Ascending aorta (tissue), 2 donors: ENCODE measurements at regions of chr10 and their contacts with region 1.

Region 1: DNA sequence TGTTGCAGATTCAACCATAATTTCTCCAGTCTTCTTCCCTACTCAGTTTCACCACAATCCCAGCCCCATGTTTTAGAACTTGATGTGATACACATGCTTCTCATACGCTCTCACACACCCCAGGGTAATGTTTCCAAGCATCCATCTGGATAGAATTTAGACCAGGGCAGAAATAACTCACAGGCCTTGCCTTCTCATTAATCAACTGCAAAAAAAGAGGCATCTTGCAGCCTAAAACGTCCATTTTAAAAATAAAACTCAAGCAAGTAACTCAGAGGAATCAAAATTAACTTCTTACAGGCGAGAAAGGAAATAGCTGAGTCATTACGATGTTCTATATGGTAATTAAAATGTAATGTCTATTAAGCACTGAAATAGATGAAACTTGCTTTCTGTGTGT is 127.2 kb upstream of the RSU1 start:
- DNase-seq: no peak
- H3K4me3 ChIP-seq: peak overlapping the region in 1 of 2 donors; percentile 8
- H3K27ac ChIP-seq: peak overlapping the region; percentile 58 to 76
- H3K4me1 ChIP-seq: peaks cover 2 to 27% of the 10 kb centered on the region in 2 donors
- H3K27me3 ChIP-seq: no peaks in the 10 kb centered on the region
- CTCF ChIP-seq: no peak

Region 2: DNA sequence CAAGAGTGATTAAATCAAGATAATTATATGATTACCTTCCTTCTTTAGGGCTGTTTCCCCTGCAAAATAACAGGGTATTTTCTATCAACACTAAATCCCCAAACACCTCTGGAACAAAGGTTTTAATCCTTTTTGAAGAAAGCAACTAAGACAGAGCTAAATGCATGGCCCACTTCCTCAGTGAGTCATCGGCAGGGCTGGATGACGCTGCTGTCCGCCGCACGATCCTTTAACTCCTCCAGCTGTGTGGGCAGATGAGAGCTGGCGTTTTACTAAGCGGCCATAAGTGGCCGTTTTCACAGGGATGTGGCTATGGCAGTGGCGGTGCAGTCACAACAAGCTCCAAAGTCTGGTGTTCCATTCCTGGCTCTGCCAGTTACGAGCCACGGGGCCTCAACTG is 346.7 kb before region 1 on chr10:
- intact Hi-C with region 1: no loop called
- DNase-seq: no peak
- H3K4me3 ChIP-seq: no peak overlapping the region
- H3K27ac ChIP-seq: no peak overlapping the region
- H3K4me1 ChIP-seq: peaks cover 0 to 15% of the 10 kb centered on the region in 2 donors
- H3K27me3 ChIP-seq: no peaks in the 10 kb centered on the region
- CTCF ChIP-seq: no peak

Region 3: GRCh38 chr10:16853201-16853600 is 91.2 kb before region 1 on chr10:
- intact Hi-C with region 1: loop called (anchors 5 kb)
- DNase-seq: no peak
- H3K4me3 ChIP-seq: no peak overlapping the region
- H3K27ac ChIP-seq: peak overlapping the region; percentile 24 to 55
- H3K4me1 ChIP-seq: peaks cover 0 to 12% of the 10 kb centered on the region in 2 donors
- H3K27me3 ChIP-seq: no peaks in the 10 kb centered on the region
- CTCF ChIP-seq: peak in 1 of 3 experiments; percentile 9

Region 4: DNA sequence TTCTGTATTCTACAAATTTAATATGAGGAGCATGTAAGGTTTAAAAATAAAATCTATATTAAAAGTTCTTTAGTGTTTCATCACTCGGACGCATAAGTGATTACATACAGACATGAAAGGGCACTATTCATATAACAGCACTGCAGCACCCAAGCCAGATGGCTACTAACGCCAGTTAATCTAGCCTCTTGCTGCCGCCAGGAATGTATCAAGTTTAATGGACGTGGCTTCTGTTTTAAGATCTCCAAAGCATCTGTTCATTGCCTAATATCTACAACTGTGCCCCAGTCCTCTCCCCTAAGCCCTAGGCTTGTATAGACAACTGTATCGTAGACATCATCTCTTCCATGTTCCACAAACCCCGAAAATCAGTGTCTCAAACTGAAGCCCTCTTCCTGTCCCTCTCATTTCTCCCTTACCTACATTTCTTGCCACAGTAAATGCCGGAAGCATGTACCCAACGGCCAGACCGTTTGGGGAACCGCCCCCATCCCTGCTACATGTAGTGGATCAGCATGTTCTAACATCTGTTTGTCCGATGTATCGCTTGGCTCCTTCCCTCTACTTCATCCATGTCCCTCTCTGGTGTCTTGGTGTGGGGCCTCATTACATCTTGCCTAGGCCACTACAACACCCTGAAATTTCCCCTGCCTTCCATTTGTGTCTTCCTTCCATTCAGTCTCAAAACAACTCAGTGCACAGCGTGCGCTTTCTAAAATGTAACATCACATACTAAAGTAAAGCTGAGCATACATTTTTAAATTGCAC is 20.4 kb after region 1 on chr10:
- intact Hi-C with region 1: no loop called
- DNase-seq: no peak
- H3K4me3 ChIP-seq: no peak overlapping the region
- H3K27ac ChIP-seq: no peak overlapping the region
- H3K4me1 ChIP-seq: peaks cover 0 to 19% of the 10 kb centered on the region in 2 donors
- H3K27me3 ChIP-seq: no peaks in the 10 kb centered on the region
- CTCF ChIP-seq: no peak

Region 5: DNA sequence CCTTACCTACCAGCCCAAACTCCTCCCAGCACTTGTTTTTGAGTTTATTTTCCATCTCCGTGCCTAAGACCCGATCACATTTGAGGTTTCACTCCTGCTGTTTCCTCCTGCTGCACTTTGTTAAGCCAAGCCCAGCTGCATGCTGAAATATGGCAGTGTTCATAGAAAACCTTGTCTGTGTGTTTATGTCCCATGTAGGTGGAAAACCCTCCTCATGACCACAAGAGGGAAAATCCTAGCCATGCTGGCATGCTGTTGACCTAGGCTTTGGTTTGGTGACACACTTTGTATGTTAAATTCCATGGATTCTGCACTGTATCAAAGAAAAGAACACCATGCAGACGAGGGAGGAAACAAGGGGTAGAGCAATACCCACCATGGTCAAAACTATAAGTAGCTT is 30.8 kb after region 1 on chr10:
- intact Hi-C with region 1: no loop called
- DNase-seq: no peak
- H3K4me3 ChIP-seq: no peak overlapping the region
- H3K27ac ChIP-seq: no peak overlapping the region
- H3K4me1 ChIP-seq: no peaks in the 10 kb centered on the region
- H3K27me3 ChIP-seq: no peaks in the 10 kb centered on the region
- CTCF ChIP-seq: no peak

Region 6: GRCh38 chr10:16986406-16987205 is 42.2 kb after region 1 on chr10:
- intact Hi-C with region 1: loop called (anchors 5 kb)
- DNase-seq: no peak
- H3K4me3 ChIP-seq: no peak overlapping the region
- H3K27ac ChIP-seq: peak overlapping the region; percentile 73 to 78
- H3K4me1 ChIP-seq: peaks cover 5 to 23% of the 10 kb centered on the region in 2 donors
- H3K27me3 ChIP-seq: no peaks in the 10 kb centered on the region
- CTCF ChIP-seq: no peak

Region 7: GRCh38 chr10:17244700-17245365 is 300.4 kb after region 1 on chr10:
- intact Hi-C with region 1: loop called (anchors 5 kb)
- DNase-seq: no peak
- H3K4me3 ChIP-seq: no peak overlapping the region
- H3K27ac ChIP-seq: no peak overlapping the region
- H3K4me1 ChIP-seq: no peaks in the 10 kb centered on the region
- H3K27me3 ChIP-seq: no peaks in the 10 kb centered on the region
- CTCF ChIP-seq: no peak